GM12878 (cell line): ENCODE measurements at regions of chr11 and their contacts with region 1.

Region 1: DNA sequence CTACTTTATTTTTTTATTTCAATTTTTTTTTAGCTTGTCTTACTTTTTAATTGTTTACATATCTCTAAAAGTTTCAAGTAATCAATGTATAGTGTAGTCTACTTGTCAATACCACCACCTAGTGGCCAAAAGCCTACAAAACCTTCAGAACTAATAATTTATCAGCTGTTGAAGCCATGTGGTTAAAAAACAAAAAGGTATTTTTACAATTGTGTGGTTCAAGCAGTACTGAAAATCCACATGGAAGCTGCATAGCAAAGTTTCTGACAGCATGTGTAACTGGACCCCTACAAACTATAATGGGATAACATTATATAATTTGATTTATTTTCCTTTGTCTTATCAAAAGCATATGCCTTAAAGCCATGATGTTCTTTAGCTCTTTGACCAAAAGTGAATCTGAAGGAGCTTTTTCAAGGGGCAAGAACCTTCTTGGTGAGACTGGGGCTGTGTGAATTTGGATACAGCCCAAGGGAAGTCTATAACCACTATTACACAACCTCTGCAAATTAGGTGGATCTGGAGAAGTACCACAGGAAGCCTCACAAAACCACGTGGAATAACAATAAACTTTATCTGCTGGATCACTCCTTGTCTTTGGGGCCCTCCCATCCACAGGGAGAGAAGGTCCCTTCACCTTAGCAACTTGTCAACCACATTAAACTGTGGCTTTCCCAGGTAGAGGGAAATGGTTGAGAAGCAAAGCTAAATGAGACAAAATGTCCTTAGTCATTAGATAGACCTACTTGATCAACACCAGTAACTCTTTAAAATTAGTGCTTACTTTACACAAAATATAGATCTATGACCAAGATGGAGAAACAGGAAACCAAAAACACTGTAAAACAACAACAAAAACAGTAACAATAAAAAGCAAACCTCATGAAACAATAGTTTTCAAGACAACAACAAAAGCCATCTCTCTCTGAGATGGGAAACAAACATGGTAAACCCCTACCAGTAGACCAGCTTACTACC is 9.9 kb downstream of the NARS2 start:
- DNase-seq: peak; percentile 40
- ATAC-seq: peak; percentile 67
- H3K4me3 ChIP-seq: no peak overlapping the region
- H3K27ac ChIP-seq: no peak overlapping the region
- H3K4me1 ChIP-seq: peaks cover 33% of the 10 kb centered on the region
- H3K27me3 ChIP-seq: no peaks in the 10 kb centered on the region
- CTCF ChIP-seq: peak; percentile 49 to 67 (median 54)
- EP300 ChIP-seq: no peak
- POLR2A ChIP-seq: no peak
- RAD21 ChIP-seq: peak; percentile 89

Region 2: DNA sequence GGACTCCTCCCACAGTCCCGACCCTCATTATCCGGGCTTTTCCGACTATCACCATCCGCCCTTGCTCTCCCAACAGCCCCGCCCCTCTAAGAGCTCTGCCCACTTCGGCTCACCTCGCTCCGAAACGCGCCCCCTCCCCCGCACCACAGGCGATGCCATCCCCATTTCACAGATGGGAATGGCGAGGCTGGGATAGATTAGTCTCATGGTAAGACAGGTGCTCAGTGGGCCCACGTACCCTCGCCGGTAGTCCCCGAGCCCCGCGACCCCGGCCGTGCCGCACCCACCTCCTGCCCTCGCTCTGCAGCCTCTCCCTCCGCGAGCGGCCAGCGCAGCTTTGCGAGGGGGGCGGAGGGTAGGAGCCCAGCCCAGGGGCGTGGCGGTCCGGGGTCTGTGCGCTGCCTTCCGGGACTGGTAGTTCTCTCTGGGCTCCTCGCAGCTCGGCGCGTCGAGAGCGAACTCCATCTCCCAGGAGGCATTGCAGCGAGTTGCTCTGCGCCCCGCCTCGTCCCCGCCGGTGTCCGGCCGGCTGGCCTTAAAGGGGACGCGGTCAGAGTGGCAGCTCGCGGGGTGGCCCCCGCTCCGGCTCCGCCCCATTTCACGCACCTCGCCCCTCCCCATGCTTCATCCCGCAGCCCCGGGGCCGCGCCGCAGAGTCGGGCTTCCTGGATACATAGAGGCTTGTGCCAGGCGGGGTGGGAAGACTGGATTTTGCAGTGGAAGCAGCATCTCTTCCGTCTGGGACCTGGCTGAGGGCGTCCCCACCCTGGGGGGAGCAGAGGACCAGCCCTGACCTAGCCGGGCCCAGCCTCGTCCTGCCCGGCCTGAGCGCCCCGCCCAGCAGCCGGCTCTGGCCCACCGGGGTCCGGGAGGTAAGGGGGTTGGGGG is 376.2 kb before region 1 on chr11 and contains the starts of genes KCTD21 and USP35:
- CTCF ChIA-PET with region 1: interaction called, 10 read pairs
- POLR2A ChIA-PET with region 1: no interaction called
- RAD21 ChIA-PET with region 1: interaction called, 3 read pairs
- SMC1A ChIA-PET with region 1: interaction called, 3 read pairs
- in situ Hi-C with region 1: no loop called
- intact Hi-C with region 1: no loop called
- DNase-seq: peak; percentile 85
- ATAC-seq: peak; percentile 98
- H3K4me3 ChIP-seq: peak within 1 kb of the TSS; percentile 82
- H3K27ac ChIP-seq: 0 out of 2 replicates have a peak within 1 kb of the TSS, but pooled peaks have one; percentile 7
- H3K4me1 ChIP-seq: peaks cover 14% of the 10 kb centered on the region
- H3K27me3 ChIP-seq: no peaks in the 10 kb centered on the region
- CTCF ChIP-seq: no peak
- EP300 ChIP-seq: no peak
- POLR2A ChIP-seq: peak; percentile 80
- RAD21 ChIP-seq: no peak
- polyA plus RNA-seq, gene KCTD21: 0.63 to 0.73 TPM
- polyA plus RNA-seq, gene USP35: 0.13 TPM in 1 of 2 experiments, not detected in the other

Region 3: GRCh38 chr11:78310500-78310909 is 254.3 kb before region 1 on chr11:
- CTCF ChIA-PET with region 1: interaction called, 10 read pairs
- POLR2A ChIA-PET with region 1: no interaction called
- RAD21 ChIA-PET with region 1: interaction called, 6 read pairs
- SMC1A ChIA-PET with region 1: interaction called, 7 read pairs
- in situ Hi-C with region 1: no loop called
- intact Hi-C with region 1: no loop called
- DNase-seq: peak; percentile 88
- ATAC-seq: peak; percentile 91
- H3K4me3 ChIP-seq: peak overlapping the region; percentile 2; the same call in 1 of the 2 replicates
- H3K27ac ChIP-seq: peak overlapping the region; percentile 50
- H3K4me1 ChIP-seq: peaks cover 46% of the 10 kb centered on the region
- H3K27me3 ChIP-seq: no peaks in the 10 kb centered on the region
- CTCF ChIP-seq: no peak
- EP300 ChIP-seq: no peak
- POLR2A ChIP-seq: no peak
- RAD21 ChIP-seq: peak; percentile 16; the same call in 1 of the 2 replicates

Region 4: DNA sequence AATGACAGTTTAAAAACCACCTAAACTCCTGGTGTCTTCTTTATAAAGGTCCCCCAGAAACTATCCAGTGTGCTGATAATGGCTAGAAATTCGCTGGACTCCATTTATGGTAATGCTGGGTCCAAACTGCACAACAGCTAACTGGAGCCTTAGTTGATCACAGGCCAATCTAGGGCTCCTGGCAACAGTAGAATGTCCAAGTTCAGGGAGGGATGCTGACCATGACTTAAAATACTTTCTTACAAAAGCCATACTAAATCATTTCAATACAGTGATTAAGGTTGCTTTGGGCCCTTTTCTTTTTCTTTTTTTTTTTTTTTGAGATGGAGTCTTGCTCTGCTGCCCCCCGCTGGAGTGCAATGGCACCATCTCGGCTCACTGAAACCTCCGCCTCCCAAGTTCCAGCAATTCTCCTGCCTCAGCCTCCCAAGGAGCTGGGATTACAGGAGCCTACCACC is 132.7 kb before region 1 on chr11:
- CTCF ChIA-PET with region 1: interaction called, 75 read pairs
- POLR2A ChIA-PET with region 1: interaction called, 3 read pairs
- RAD21 ChIA-PET with region 1: interaction called, 19 read pairs
- SMC1A ChIA-PET with region 1: interaction called, 24 read pairs
- in situ Hi-C with region 1: no loop called
- intact Hi-C with region 1: no loop called
- DNase-seq: no peak
- ATAC-seq: no peak
- H3K4me3 ChIP-seq: no peak overlapping the region
- H3K27ac ChIP-seq: no peak overlapping the region
- H3K4me1 ChIP-seq: peaks cover 27% of the 10 kb centered on the region
- H3K27me3 ChIP-seq: no peaks in the 10 kb centered on the region
- CTCF ChIP-seq: peak in 2 of 3 experiments; percentile 35 to 41; a peak in 2 of 6 replicates
- EP300 ChIP-seq: no peak
- POLR2A ChIP-seq: no peak
- RAD21 ChIP-seq: peak; percentile 38; the same call in 1 of the 2 replicates

Region 5: DNA sequence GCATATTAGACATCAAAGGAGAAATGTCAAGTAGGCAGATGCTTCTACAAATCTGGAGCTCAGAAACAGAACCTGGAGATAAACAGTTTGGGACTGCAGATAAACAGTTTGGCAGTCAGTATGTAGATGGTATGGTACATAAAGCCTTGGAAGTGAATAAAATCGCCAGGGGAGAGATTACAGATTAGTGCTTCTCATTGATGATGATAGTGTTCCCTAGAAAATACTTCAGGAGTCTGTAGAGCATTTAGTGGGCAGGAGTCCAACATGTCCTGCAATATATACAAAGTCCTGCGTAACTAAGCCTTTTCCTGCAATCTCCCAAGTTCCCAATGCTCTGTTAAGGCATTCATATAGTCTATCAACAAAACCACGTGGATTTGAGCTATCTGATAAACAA is 25.3 kb before region 1 on chr11:
- CTCF ChIA-PET with region 1: interaction called, 10 read pairs
- POLR2A ChIA-PET with region 1: interaction called, 3 read pairs
- RAD21 ChIA-PET with region 1: interaction called, 5 read pairs
- SMC1A ChIA-PET with region 1: interaction called, 13 read pairs
- in situ Hi-C with region 1: no loop called
- intact Hi-C with region 1: no loop called
- DNase-seq: no peak
- ATAC-seq: no peak
- H3K4me3 ChIP-seq: no peak overlapping the region
- H3K27ac ChIP-seq: no peak overlapping the region
- H3K4me1 ChIP-seq: peaks cover 15% of the 10 kb centered on the region
- H3K27me3 ChIP-seq: no peaks in the 10 kb centered on the region
- CTCF ChIP-seq: no peak
- EP300 ChIP-seq: no peak
- POLR2A ChIP-seq: no peak
- RAD21 ChIP-seq: no peak

Region 6: DNA sequence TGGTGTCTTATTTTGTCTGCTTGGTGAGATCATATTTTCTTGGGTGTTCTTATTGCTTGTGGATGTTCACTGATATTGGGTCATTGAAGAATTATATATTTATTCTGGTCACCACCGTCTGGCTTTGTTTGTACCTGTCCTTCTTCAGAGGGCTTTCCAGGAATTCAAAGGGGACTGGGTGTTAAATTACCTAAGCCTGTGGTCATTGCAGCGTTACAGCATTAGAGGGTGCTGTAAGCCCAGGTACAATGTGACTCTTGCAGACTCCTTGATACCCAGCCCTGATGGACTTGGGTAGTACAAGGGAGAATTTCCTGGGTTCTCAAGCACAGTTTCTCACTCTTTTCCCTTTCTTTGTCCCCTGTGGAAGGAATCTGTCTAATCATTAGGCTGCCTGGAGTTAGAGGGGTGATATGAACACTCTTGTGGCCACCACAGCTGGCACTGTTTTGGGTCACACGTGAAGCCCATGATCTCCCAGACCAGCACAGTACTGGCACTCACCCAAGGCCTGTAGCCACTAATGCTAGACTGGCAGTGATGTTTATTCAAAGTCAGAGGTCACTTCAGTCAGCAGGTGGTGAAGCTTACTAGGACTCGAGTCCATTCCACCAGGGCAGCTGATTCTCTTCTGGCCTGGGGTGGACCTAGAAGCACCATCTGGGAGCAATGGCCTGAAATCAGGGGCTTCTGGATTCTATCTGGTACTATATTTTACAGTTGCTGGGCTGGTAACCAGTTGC is 66.0 kb after region 1 on chr11:
- CTCF ChIA-PET with region 1: no interaction called
- POLR2A ChIA-PET with region 1: no interaction called
- RAD21 ChIA-PET with region 1: no interaction called
- SMC1A ChIA-PET with region 1: no interaction called
- in situ Hi-C with region 1: no loop called
- intact Hi-C with region 1: no loop called
- DNase-seq: no peak
- ATAC-seq: no peak
- H3K4me3 ChIP-seq: no peak overlapping the region
- H3K27ac ChIP-seq: no peak overlapping the region
- H3K4me1 ChIP-seq: no peaks in the 10 kb centered on the region; the same call in 1 of the 2 replicates
- H3K27me3 ChIP-seq: no peaks in the 10 kb centered on the region
- CTCF ChIP-seq: no peak
- EP300 ChIP-seq: no peak
- POLR2A ChIP-seq: no peak
- RAD21 ChIP-seq: no peak